AG04449 (cell line): ENCODE measurements at regions of chr3 and their contacts with region 1.

Region 1: GRCh38 chr3:50235716-50236496 is at the start of gene GNAI2:
- DNase-seq: peak; percentile 82
- H3K4me3 ChIP-seq: peak within 1 kb of the TSS; percentile 83
- CTCF ChIP-seq: no peak

Region 2: GRCh38 chr3:50251220-50251619 is 15.3 kb after region 1 on chr3:
- CTCF ChIA-PET with region 1: interaction called, 1,609 read pairs
- POLR2A ChIA-PET with region 1: interaction called, 25 read pairs
- DNase-seq: no peak
- H3K4me3 ChIP-seq: no peak overlapping the region
- CTCF ChIP-seq: no peak

Region 3: GRCh38 chr3:50267280-50267913 is 31.5 kb after region 1 on chr3:
- CTCF ChIA-PET with region 1: interaction called, 1,609 read pairs
- POLR2A ChIA-PET with region 1: interaction called, 10 read pairs
- DNase-seq: no peak
- H3K4me3 ChIP-seq: peak overlapping the region; percentile 57
- CTCF ChIP-seq: no peak